ENCODE measurements at regions of chr17 and their contacts with region 1.

Region 1: GRCh38 chr17:44503147-44504029 is at the start of gene GPATCH8:
- DNase-seq: peak; percentile 97 to 98
- ATAC-seq: peak; percentile 100
- H3K4me3 ChIP-seq: peak within 1 kb of the TSS; percentile 83 to 99
- H3K27ac ChIP-seq: peak within 1 kb of the TSS; percentile 1 to 85
- H3K4me1 ChIP-seq: peaks cover 2 to 3% of the 10 kb centered on the region in 2 donors
- H3K27me3 ChIP-seq: no peaks in the 10 kb centered on the region
- total RNA-seq, gene GPATCH8: 42.7 to 56.5 TPM

Region 2: GRCh38 chr17:44374306-44375195 is 128.8 kb before region 1 on chr17:
- intact Hi-C with region 1: no loop called
- DNase-seq: peak in 1 of 2 donors; percentile 57
- ATAC-seq: peak; percentile 15
- H3K4me3 ChIP-seq: no peak overlapping the region
- H3K27ac ChIP-seq: no peak overlapping the region
- H3K4me1 ChIP-seq: no peaks in the 10 kb centered on the region
- H3K27me3 ChIP-seq: no peaks in the 10 kb centered on the region

Region 3: DNA sequence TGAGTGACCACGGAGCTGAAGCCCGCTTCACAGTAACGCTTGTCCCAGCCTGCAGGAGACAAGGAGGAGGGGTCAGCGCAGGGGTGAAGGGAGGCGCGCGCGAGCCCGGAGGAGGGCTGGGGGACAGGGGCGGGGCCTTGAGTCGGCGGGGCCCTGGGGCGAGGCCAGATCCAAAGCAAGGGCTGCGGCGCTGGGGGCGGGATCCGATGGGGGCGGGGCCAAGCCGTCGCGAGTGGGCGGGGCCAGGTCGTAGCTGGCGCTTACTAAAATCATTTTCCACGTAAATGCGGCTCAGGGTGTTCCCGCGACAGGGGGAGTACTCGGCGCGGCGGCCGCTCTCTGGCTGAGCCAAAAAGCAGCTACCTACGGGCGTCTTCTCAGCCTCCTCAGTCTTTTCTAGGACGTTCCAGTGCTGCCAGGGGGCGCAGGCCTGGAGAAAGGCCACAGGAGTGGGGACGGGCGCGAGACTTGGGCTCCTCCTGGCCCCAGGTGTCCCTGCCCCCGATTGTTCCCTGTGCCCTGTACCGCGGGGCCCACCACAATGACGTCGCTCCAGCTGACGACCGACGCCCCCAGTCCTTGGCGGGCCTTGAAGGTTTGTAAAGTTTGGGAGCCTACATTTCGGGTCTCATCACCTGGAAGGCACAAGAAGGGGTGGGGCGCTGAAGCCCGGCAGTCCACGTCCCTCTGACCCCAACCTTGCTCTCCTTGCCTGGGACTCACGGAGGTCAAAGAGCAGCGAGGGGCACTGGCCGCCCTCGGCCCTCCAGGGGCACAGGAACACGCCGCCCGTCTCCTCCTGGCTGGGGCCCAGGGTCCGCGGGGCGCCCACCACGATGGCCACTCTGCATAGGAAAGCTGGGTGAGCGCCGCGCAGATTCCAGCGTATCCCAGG is 117.9 kb before region 1 on chr17:
- intact Hi-C with region 1: loop called in 1 of 2 experiments (anchors 10 kb)
- DNase-seq: peak; percentile 84 to 94
- ATAC-seq: peak; percentile 93
- H3K4me3 ChIP-seq: peak overlapping the region; percentile 10 to 21
- H3K27ac ChIP-seq: no peak overlapping the region
- H3K4me1 ChIP-seq: no peaks in the 10 kb centered on the region
- H3K27me3 ChIP-seq: no peaks in the 10 kb centered on the region

Region 4: GRCh38 chr17:44409314-44410028 is 93.9 kb before region 1 on chr17:
- intact Hi-C with region 1: no loop called
- DNase-seq: no peak
- ATAC-seq: no peak
- H3K4me3 ChIP-seq: no peak overlapping the region
- H3K27ac ChIP-seq: no peak overlapping the region
- H3K4me1 ChIP-seq: no peaks in the 10 kb centered on the region
- H3K27me3 ChIP-seq: no peaks in the 10 kb centered on the region

Region 5: GRCh38 chr17:44466339-44466738 is 37.0 kb before region 1 on chr17:
- intact Hi-C with region 1: loop called in 1 of 2 experiments (anchors 5 kb)
- DNase-seq: no peak
- ATAC-seq: no peak
- H3K4me3 ChIP-seq: no peak overlapping the region
- H3K27ac ChIP-seq: no peak overlapping the region
- H3K4me1 ChIP-seq: peaks cover 4 to 9% of the 10 kb centered on the region in 2 donors
- H3K27me3 ChIP-seq: no peaks in the 10 kb centered on the region